ENCODE measurements at regions of chr9 and their contacts with region 1.

Region 1: GRCh38 chr9:74463825-74464224 is 33.3 kb upstream of the RORB start:
- DNase-seq: no peak
- H3K4me3 ChIP-seq: no peak overlapping the region
- CTCF ChIP-seq: no peak
- POLR2A ChIP-seq: no peak

Region 2: GRCh38 chr9:74391816-74392215 is 72.0 kb before region 1 on chr9:
- intact Hi-C with region 1: no loop called
- DNase-seq: no peak
- H3K4me3 ChIP-seq: no peak overlapping the region
- CTCF ChIP-seq: no peak
- POLR2A ChIP-seq: no peak

Region 3: GRCh38 chr9:74447451-74448193 is 16.2 kb before region 1 on chr9:
- intact Hi-C with region 1: loop called (anchors 1 kb)
- DNase-seq: no peak
- H3K4me3 ChIP-seq: no peak overlapping the region
- CTCF ChIP-seq: no peak
- POLR2A ChIP-seq: no peak

Measured in lower leg skin (tissue), 4 donors.